GM13976 (cell line): ENCODE measurements at regions of chr10 and their contacts with region 1.

Region 1: GRCh38 chr10:6423004-6423403 is 157.1 kb downstream of the PRKCQ start:
- DNase-seq: no peak
- CTCF ChIP-seq: no peak

Region 2: DNA sequence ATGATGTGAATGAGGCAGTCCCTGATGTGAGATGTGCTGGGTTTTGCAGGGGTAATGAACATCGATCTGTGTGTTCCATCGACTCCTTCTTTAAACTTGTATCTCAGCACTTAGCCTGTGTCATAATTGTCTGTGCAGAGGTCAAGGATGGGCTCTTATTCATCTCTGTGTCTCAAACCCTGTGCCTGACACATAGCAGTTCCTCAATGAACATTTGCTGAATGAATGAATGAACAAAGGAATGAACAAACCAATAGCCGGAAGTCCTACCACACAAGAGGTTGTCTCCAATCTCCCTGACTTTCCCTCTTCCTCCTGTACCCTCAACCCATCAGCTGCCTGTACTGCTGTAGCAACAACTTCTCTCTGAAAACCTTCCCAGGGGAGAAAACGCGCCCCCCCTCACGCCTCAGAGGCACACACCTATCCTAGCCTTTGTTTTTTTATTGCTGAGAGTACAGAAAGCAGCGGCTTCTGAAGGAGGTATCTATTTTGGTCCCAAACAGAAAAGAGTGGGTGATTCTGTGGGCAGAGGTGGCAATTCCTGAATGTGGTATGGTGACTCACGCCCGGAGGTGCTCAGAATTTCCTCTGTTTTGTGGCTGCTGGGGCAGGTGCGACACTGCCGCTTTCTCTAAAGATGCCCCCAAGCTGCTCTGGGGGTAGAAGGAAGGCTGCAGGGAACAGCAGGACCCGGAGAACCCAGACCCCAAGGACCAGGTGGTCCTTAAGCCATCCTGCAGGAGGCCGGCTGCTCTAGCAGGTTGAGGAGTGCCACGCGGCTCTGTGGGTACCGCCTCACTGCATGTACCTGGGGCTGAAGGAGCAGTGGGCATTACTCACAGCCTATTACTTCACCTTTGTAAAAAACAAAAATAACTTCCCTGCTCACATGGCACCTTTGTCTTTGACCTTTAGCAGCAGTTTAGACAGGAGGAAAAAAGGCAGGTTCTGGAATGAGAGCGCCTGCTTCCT is 370.5 kb before region 1 on chr10:
- in situ Hi-C with region 1: no loop called
- DNase-seq: no peak
- CTCF ChIP-seq: no peak

Region 3: DNA sequence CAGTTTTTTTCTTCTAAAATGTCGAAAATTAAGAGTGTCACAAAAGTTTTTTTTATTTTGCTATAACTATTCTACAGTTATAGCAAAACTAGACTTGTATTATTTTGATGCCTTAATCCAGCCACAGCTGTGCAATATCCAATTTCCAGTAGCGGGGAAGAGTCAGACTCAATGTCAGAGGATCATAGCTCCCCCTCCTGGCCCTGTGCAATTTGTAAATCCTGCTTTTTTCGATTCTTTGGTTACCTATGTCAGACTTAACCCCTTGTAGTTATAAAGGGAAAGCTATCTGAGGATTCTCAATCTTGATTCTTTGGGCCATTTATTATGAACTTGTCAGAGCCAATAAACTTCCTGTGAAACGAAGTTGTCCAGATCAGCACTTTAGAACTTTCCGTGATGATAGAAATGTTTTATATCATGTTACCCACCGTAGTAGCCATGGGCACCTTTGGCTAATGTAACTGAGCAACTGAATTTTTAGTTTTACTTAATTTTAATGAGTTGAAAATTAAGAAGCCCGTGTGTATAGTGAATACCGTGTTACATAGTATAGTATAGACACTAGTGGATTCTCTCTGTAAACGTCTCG is 244.8 kb after region 1 on chr10:
- in situ Hi-C with region 1: loop called (anchors 10 kb)
- DNase-seq: no peak
- CTCF ChIP-seq: peak; percentile 27

Region 4: DNA sequence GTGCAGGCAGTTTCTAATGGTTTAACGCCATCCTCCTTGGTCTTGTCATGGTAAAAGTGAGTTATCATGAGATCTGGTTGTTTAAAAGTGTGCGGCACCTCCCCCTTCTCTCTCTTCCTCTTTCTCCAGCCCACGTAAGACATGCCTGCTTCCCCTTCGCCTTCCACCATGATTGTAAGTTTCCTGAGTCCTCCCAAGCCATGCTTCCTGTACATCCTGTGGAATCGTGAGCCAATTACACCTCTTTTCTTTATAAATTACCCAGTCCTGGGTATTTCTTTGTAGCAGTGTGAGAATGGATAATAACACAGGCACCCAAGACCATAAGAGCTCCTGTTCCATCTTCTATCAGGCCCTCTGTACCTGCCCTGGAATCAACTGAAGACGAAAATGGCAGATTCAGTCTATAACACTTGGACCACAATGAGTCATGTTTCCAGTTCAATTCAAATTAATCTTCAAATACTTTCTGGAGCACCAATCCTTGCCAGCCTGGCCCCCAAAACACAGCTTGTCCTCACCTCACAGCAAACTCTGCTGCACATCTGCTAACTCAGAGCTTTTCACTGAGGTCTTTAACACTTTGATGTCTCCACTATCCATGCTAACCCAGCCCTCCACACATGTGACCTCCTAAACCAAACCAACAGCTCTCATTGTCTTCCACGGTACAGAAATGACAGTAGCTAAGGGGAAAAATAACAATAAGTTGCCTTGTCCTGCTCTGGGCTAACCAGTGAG is 914.6 kb after region 1 on chr10:
- in situ Hi-C with region 1: no loop called
- DNase-seq: peak; percentile 60
- CTCF ChIP-seq: no peak